Activated T-helper 1 cell treated with anti-CD3 and anti-CD28 coated beads, Interleukin-12 subunit alpha, Interleukin-12 subunit beta, Interleukin-2, Interleukin-4 antibody, amounts not matched to agents 30 ng/mL and 10 ng/mL and 1 ng/mL, durations not matched to agents 14 hours and 24 hours and 36 hours (primary cell): ENCODE measurements at regions of chr5 and their contacts with region 1.

Region 1: GRCh38 chr5:134626369-134627014 is 6.1 kb downstream of the SAR1B start:
- DNase-seq: no peak
- H3K4me3 Mint-ChIP-seq: no peak overlapping the region
- H3K27ac Mint-ChIP-seq: peak overlapping the region; percentile 27
- H3K4me1 Mint-ChIP-seq: peaks cover 21% of the 10 kb centered on the region
- H3K27me3 Mint-ChIP-seq: no peaks in the 10 kb centered on the region

Region 2: GRCh38 chr5:134614450-134615085 is 11.9 kb before region 1 on chr5:
- intact Hi-C with region 1: loop called (anchors 2 kb)
- DNase-seq: no peak
- H3K4me3 Mint-ChIP-seq: no peak overlapping the region
- H3K27ac Mint-ChIP-seq: peak overlapping the region; percentile 42
- H3K4me1 Mint-ChIP-seq: peaks cover 17% of the 10 kb centered on the region
- H3K27me3 Mint-ChIP-seq: no peaks in the 10 kb centered on the region

Region 3: DNA sequence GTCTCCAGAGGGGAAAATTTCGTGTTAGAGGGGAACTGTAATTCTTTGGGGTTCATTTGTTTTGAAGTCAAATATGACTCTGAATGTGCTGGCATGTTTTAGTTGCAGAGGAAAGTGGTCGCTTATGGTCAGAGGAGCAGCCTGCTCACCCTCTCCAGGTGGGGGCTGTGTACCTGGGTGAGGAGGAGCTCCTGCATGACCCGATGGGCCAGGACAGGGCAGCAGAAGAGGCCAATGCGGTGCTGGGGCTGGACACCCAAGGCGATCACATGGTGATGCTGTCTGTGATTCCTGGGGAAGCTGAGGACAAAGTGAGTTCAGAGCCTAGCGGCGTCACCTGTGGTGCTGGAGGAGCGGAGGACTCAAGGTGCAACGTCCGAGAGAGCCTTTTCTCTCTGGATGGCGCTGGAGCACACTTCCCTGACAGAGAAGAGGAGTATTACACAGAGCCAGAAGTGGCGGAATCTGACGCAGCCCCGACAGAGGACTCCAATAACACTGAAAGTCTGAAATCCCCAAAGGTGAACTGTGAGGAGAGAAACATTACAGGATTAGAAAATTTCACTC is 261.2 kb after region 1 on chr5:
- intact Hi-C with region 1: no loop called
- DNase-seq: no peak
- H3K4me3 Mint-ChIP-seq: no peak overlapping the region
- H3K27ac Mint-ChIP-seq: no peak overlapping the region
- H3K4me1 Mint-ChIP-seq: peaks cover 15% of the 10 kb centered on the region
- H3K27me3 Mint-ChIP-seq: no peaks in the 10 kb centered on the region

Region 4: GRCh38 chr5:134905246-134905996 is 278.9 kb after region 1 on chr5:
- intact Hi-C with region 1: no loop called
- DNase-seq: peak; percentile 53
- H3K4me3 Mint-ChIP-seq: peak overlapping the region; percentile 94
- H3K27ac Mint-ChIP-seq: peak overlapping the region; percentile 99
- H3K4me1 Mint-ChIP-seq: peaks cover 20% of the 10 kb centered on the region
- H3K27me3 Mint-ChIP-seq: no peaks in the 10 kb centered on the region